ENCODE measurements at regions of chr6 and their contacts with region 1.

Region 1: GRCh38 chr6:106339334-106340029 is 13.9 kb upstream of the ATG5 start:
- DNase-seq: peak; percentile 68
- ATAC-seq: peak; percentile 98
- H3K4me3 Mint-ChIP-seq: no peak overlapping the region
- H3K27ac Mint-ChIP-seq: no peak overlapping the region
- H3K4me1 Mint-ChIP-seq: peaks cover 5% of the 10 kb centered on the region
- H3K27me3 Mint-ChIP-seq: peaks cover 34% of the 10 kb centered on the region

Region 2: GRCh38 chr6:105974986-105975385 is 364.5 kb before region 1 on chr6:
- CTCF ChIA-PET with region 1: no interaction called
- POLR2A ChIA-PET with region 1: no interaction called
- intact Hi-C with region 1: no loop called
- DNase-seq: no peak
- ATAC-seq: no peak
- H3K4me3 Mint-ChIP-seq: no peak overlapping the region
- H3K27ac Mint-ChIP-seq: no peak overlapping the region
- H3K4me1 Mint-ChIP-seq: peaks cover 13% of the 10 kb centered on the region
- H3K27me3 Mint-ChIP-seq: peaks cover 25% of the 10 kb centered on the region

Region 3: GRCh38 chr6:106325336-106326178 is 13.9 kb before region 1 on chr6 and contains the start of gene ATG5:
- CTCF ChIA-PET with region 1: interaction called, 16 read pairs
- POLR2A ChIA-PET with region 1: interaction called, 3 read pairs
- intact Hi-C with region 1: no loop called
- DNase-seq: peak; percentile 100
- ATAC-seq: peak; percentile 96
- H3K4me3 Mint-ChIP-seq: peak within 1 kb of the TSS; percentile 99
- H3K27ac Mint-ChIP-seq: peak within 1 kb of the TSS; percentile 98
- H3K4me1 Mint-ChIP-seq: peaks cover 39% of the 10 kb centered on the region
- H3K27me3 Mint-ChIP-seq: peaks cover 8% of the 10 kb centered on the region
- total RNA-seq, gene ATG5: 27.2 to 31.6 TPM

Region 4: DNA sequence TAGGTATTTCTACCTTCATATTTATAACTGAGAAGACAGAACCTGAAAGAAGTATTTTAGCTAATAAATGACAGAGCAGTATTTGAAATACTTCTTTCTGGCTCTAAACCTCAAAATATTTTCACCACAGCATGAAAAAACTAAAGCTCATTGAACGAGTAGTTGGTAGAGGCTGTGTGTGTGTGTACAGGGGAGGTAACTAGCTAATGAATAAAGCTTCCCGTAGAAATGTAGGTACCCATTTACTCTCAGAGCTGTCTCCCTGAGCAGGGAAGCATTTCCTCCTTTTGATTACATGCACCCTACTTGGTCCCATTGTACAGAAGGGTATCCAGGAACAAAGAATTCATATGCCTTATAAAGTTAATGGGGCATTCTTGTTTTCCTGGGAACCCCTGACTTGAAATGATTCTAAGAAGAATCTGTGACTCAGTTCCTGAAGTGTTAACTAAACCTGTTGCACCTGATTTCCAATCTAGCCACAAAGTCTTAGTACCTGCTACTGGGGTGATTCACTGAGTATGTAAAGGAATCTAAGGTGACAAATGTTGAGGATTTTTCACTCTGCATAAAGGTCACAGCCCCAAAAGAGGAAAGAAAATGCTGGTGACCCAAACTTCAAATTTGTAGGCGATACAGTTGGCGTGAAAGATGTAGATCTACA is 33.5 kb after region 1 on chr6:
- CTCF ChIA-PET with region 1: interaction called, 11 read pairs
- POLR2A ChIA-PET with region 1: no interaction called
- intact Hi-C with region 1: no loop called
- DNase-seq: no peak
- ATAC-seq: peak; percentile 89
- H3K4me3 Mint-ChIP-seq: no peak overlapping the region
- H3K27ac Mint-ChIP-seq: peak overlapping the region; percentile 78
- H3K4me1 Mint-ChIP-seq: peaks cover 12% of the 10 kb centered on the region
- H3K27me3 Mint-ChIP-seq: peaks cover 8% of the 10 kb centered on the region

Region 5: GRCh38 chr6:106979427-106979884 is 640.0 kb after region 1 on chr6:
- CTCF ChIA-PET with region 1: interaction called, 11 read pairs
- POLR2A ChIA-PET with region 1: no interaction called
- intact Hi-C with region 1: loop called (anchors 1 to 2 kb)
- DNase-seq: peak; percentile 91
- ATAC-seq: peak; percentile 60
- H3K4me3 Mint-ChIP-seq: no peak overlapping the region
- H3K27ac Mint-ChIP-seq: no peak overlapping the region
- H3K4me1 Mint-ChIP-seq: peaks cover 5% of the 10 kb centered on the region
- H3K27me3 Mint-ChIP-seq: peaks cover 29% of the 10 kb centered on the region